ENCODE measurements at regions of chr7 and their contacts with region 1.

Region 1: GRCh38 chr7:25069900-25070443 is 55.1 kb downstream of the CYCS start:
- DNase-seq: peak; percentile 64
- ATAC-seq: peak; percentile 68
- H3K4me3 ChIP-seq: peak overlapping the region; percentile 18 to 48 (median 36); a peak in 4 of 6 replicates
- H3K27ac ChIP-seq: no peak overlapping the region
- H3K4me1 ChIP-seq: peaks cover 33% of the 10 kb centered on the region
- H3K27me3 ChIP-seq: no peaks in the 10 kb centered on the region
- CTCF ChIP-seq: peak; percentile 79
- EP300 ChIP-seq: no peak
- POLR2A ChIP-seq: no peak
- RAD21 ChIP-seq: peak; percentile 44; the same call in 1 of the 2 replicates

Region 2: DNA sequence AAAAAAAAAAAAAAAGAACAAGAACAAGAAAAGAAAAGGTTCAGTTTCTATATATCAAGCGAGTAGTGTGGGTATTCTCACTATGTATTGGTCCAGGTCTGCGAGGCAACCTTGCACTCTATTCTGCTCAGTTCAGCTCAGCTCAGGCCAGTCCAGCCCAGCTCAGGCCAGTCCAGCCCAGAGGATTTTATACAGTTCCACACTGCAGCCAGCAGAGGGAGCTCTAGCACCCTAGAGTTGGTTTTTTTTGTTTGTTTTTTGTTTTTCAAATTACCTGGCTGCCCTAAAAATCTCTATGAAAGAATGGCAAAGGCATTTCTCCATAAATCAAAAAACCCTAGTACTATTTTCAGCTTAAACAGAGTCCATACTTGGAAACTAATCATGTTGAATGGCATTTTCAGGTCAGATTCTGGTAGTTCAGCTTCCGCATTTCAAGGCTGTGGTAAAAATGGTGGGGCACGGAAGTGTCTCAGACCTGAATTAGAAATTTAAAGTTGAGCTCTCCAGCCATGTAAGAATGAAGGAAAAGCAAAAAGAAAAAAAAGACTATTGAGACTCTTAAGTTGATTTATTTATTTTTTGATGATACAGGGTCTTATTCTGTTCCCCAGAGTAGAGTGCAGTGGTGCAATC is 257.5 kb before region 1 on chr7:
- CTCF ChIA-PET with region 1: interaction called, 27 read pairs
- POLR2A ChIA-PET with region 1: no interaction called
- in situ Hi-C with region 1: no loop called
- intact Hi-C with region 1: loop called (anchors 1 kb)
- DNase-seq: peak; percentile 46
- ATAC-seq: peak; percentile 96
- H3K4me3 ChIP-seq: no peak overlapping the region
- H3K27ac ChIP-seq: no peak overlapping the region
- H3K4me1 ChIP-seq: no peaks in the 10 kb centered on the region
- H3K27me3 ChIP-seq: no peaks in the 10 kb centered on the region
- CTCF ChIP-seq: peak; percentile 80
- EP300 ChIP-seq: no peak
- POLR2A ChIP-seq: no peak
- RAD21 ChIP-seq: peak; percentile 68

Region 3: DNA sequence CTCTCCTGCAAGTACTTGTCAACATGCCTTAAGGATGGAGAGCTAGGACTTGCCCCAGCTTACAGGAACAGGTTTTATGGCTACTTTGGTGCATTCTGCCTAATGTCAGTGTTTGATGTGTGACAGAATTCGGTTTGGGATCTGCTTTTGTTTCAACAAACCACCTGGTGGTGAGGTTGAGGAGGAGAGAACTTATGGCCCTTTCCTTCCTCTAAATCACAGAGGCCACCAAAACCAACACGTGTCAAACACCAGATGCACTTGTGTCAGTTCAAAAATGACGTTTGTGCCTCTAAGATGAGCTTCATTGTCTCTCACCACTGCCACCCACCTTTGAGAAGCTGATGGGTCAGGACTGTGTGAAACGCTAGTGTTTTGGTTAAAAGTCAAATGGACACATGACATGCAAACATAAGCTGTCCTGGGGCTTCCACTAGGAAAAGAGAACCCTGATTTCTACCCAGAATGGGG is 173.9 kb before region 1 on chr7:
- CTCF ChIA-PET with region 1: interaction called, 8 read pairs
- POLR2A ChIA-PET with region 1: no interaction called
- in situ Hi-C with region 1: loop called (anchors 10 kb)
- intact Hi-C with region 1: loop called (anchors 2 kb)
- DNase-seq: no peak
- ATAC-seq: no peak
- H3K4me3 ChIP-seq: no peak overlapping the region
- H3K27ac ChIP-seq: no peak overlapping the region
- H3K4me1 ChIP-seq: peaks cover 8% of the 10 kb centered on the region
- H3K27me3 ChIP-seq: no peaks in the 10 kb centered on the region
- CTCF ChIP-seq: no peak
- EP300 ChIP-seq: no peak
- POLR2A ChIP-seq: no peak
- RAD21 ChIP-seq: no peak

Region 4: DNA sequence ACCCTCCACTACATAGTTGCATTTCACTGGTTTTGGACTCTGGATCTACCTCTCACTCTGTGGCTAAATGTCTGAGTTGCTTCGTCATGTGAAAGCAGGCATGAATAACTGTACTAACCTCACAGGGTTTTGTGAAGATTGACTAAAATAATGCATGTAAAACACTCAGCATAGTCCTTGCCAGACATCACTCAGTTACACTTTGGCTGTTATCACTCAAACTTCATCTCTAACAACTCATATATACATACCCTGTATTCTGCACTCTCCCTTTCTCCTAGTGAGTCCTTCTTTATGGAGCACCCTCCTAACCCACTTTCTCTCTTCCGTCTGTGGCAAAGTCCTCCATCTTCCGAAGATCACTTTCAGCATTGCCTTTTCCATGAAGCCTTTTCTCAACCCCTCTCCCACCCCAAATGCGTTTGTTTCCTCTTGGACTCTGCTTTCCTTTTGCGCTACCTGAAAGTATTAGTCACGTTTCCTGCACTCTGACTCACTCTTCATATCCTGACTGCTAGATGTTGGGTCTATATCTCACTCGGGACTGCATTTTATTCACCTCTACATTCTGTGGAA is 162.6 kb before region 1 on chr7:
- CTCF ChIA-PET with region 1: no interaction called
- POLR2A ChIA-PET with region 1: no interaction called
- in situ Hi-C with region 1: loop called (anchors 10 kb)
- intact Hi-C with region 1: no loop called
- DNase-seq: no peak
- ATAC-seq: no peak
- H3K4me3 ChIP-seq: no peak overlapping the region
- H3K27ac ChIP-seq: no peak overlapping the region
- H3K4me1 ChIP-seq: peaks cover 44% of the 10 kb centered on the region
- H3K27me3 ChIP-seq: no peaks in the 10 kb centered on the region
- CTCF ChIP-seq: no peak
- EP300 ChIP-seq: no peak
- POLR2A ChIP-seq: no peak
- RAD21 ChIP-seq: no peak

Region 5: GRCh38 chr7:24979863-24980533 is 90.0 kb before region 1 on chr7 and contains the start of gene OSBPL3:
- CTCF ChIA-PET with region 1: interaction called, 6 read pairs
- POLR2A ChIA-PET with region 1: no interaction called
- in situ Hi-C with region 1: loop called (anchors 5 kb)
- intact Hi-C with region 1: loop called (anchors 1 kb)
- DNase-seq: peak; percentile 91
- ATAC-seq: peak; percentile 84
- H3K4me3 ChIP-seq: peak within 1 kb of the TSS; percentile 78 to 89 (median 87)
- H3K27ac ChIP-seq: peak within 1 kb of the TSS; percentile 94
- H3K4me1 ChIP-seq: peaks cover 82% of the 10 kb centered on the region
- H3K27me3 ChIP-seq: no peaks in the 10 kb centered on the region; a peak in 1 of 5 replicates
- CTCF ChIP-seq: peak; percentile 46
- EP300 ChIP-seq: no peak
- POLR2A ChIP-seq: peak; percentile 72 to 81
- RAD21 ChIP-seq: no peak; the same call in 1 of the 2 replicates
- total RNA-seq, gene OSBPL3: 26.4 and 28.9 TPM in 2 replicates

Region 6: DNA sequence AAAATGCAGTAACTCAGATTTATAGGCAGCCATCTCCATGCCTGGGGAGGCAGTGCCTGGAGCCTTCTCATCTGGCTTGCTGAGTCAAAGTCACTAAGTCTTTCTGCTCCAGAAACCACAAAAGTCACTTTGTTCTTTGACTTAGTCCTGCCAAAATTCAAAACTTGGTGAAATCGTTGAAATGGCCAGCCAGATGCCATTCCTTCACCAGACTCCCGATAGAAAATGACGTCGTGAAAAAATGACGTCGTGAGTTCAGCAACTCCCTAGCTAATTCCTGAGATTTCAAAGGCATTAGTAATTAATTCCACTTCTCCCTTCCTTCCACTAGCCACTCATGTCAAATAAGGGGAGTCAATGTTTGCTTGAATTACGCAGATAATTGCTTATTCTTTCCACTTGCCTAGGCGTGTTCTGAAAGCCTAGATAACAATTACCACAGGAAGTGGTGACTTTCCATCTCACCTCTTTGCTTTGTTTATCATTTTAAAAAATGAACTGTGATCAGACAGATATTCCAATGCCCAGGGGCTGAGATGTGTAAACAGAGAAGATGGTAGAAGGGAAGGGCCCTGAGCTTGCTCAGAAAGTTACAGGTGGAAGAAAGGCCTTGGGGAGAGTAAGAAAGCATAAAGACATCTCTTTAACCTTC is 41.5 kb before region 1 on chr7:
- CTCF ChIA-PET with region 1: interaction called, 5 read pairs
- POLR2A ChIA-PET with region 1: no interaction called
- in situ Hi-C with region 1: no loop called
- intact Hi-C with region 1: loop called (anchors 5 kb)
- DNase-seq: peak; percentile 76
- ATAC-seq: no peak
- H3K4me3 ChIP-seq: no peak overlapping the region; a peak in 1 of 6 replicates
- H3K27ac ChIP-seq: peak overlapping the region; percentile 14
- H3K4me1 ChIP-seq: peaks cover 86% of the 10 kb centered on the region
- H3K27me3 ChIP-seq: no peaks in the 10 kb centered on the region
- CTCF ChIP-seq: no peak
- EP300 ChIP-seq: peak in 1 of 2 experiments; percentile 46; a peak in 1 of 4 replicates
- POLR2A ChIP-seq: no peak
- RAD21 ChIP-seq: no peak

Region 7: GRCh38 chr7:25187932-25188331 is 118.0 kb after region 1 on chr7:
- CTCF ChIA-PET with region 1: no interaction called
- POLR2A ChIA-PET with region 1: no interaction called
- in situ Hi-C with region 1: no loop called
- intact Hi-C with region 1: no loop called
- DNase-seq: peak; percentile 21
- ATAC-seq: peak; percentile 35; the same call in 2 of the 3 replicates
- H3K4me3 ChIP-seq: no peak overlapping the region
- H3K27ac ChIP-seq: no peak overlapping the region
- H3K4me1 ChIP-seq: peaks cover 49% of the 10 kb centered on the region
- H3K27me3 ChIP-seq: no peaks in the 10 kb centered on the region
- CTCF ChIP-seq: no peak
- EP300 ChIP-seq: no peak
- POLR2A ChIP-seq: no peak
- RAD21 ChIP-seq: no peak